ENCODE measurements at regions of chr11 and their contacts with region 1.

Region 1: DNA sequence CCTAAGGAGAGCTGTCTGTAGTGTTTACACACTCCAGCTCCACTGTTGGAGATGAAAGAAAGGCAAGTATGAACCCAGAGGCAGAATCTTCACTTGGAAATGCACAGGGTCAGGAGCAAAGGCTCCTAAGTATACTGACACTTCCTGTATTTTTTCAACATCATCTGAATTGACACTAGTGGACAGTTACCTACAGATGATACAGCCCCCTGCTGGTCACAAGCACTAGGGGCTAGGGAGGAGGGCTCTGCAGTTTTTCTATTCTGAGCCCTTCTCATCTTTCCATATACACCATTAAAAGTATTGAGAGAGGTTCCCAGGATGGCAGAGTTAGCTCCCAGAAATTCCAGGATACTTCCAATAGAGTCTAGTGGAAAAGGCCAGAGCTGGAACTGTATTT is 290.3 kb upstream of the API5 start:
- DNase-seq: no peak
- ATAC-seq: peak; percentile 44

Region 2: DNA sequence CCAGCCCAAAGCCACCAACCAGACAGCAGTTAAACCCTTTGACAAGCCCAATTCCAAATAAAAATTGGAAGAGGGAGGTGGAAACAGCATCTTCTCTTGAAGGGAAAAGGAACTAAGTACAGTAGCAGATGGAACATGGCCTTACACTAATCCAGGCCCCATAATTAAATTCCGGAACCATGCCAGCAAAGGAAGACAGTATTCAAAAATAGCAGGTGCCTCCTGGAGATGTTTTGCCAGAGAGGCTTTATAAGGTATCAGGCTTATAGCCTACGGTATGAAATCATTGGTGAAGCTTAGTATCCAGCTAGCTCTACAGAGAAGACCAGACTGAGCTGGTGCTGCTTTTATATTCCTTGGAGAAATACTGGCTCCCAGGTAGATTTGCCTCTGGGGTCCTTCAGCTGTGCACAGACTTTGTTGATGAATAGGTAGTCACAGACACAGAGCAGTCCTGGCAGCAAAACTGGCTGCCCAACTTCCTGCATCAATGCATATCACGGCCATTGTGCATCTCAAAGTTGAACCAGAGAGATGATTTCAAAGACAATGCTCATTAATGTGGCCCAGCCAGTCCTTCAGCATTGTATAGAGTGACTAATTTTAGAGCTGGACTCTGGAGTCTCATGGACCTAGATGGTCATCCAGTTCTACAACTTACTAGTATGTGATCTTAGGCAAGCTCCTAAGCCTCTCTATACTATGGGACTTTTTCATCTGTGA is 53.7 kb before region 1 on chr11:
- intact Hi-C with region 1: loop called (anchors 10 kb)
- DNase-seq: no peak
- ATAC-seq: no peak

Region 3: DNA sequence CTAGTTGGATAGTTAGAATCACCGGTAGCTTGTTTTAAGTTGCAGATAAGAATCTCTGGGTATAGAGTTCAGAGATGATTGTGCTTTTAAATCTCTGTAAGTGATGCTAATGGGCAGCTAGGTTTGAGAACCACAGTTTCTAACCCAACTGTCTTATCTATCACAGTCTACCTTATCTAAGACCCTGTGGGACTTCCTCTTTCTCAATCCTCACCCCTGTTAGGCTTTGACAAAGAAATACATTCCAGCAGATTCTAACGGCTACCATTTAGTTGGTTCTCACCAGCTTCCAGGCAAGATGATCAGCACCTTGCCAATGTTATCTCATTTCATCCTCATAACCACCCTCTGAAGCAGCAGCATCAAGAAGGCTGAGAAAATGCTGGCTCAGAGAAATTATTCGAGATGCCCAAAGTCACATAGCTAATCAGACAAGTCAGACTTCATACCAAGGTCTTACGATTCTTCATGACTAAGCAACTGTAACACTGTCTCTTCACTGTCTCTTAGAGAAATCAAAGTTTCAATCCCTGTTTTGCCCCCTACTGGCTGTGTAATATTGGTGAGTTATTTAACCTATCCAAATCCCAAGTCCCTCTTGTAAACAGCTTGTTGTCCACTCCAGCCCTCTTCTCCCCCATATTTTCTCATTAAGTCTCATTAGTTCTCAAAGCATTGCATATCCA is 98.0 kb after region 1 on chr11:
- intact Hi-C with region 1: no loop called
- DNase-seq: no peak
- ATAC-seq: no peak

Region 4: GRCh38 chr11:43399983-43400630 is 378.6 kb after region 1 on chr11:
- intact Hi-C with region 1: no loop called
- DNase-seq: no peak
- ATAC-seq: no peak

Measured in sciatic nerve (tissue), 2 donors.